OCI-LY7 (cell line): ENCODE measurements at regions of chr12 and their contacts with region 1.

Region 1: GRCh38 chr12:32708926-32709325 is 29.8 kb downstream of the DNM1L start:
- DNase-seq: no peak
- H3K4me3 ChIP-seq: no peak overlapping the region
- H3K27ac ChIP-seq: no peak overlapping the region
- H3K4me1 ChIP-seq: no peaks in the 10 kb centered on the region
- CTCF ChIP-seq: no peak

Region 2: DNA sequence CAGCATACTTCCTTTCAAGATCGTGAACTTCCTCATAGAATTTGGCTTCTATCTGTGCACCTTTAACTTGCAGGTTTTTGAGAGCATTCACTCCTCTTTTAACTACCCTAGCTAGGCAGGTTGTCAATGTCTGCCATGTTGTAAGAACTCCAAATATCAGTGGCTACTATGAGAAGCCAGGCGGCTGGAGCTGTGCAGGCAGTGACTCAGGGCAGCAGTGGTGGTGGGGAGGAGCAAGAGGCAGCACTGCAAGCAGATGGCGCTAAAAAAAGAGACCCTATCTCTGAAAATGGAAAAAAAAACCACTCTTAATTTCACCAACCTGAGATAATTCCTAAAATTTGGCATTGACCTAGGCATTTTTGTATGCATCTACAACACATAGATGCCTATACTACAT is 18.3 kb after region 1 on chr12:
- CTCF ChIA-PET with region 1: no interaction called
- POLR2A ChIA-PET with region 1: interaction called, 11 read pairs
- intact Hi-C with region 1: no loop called
- DNase-seq: no peak
- H3K4me3 ChIP-seq: no peak overlapping the region
- H3K27ac ChIP-seq: no peak overlapping the region
- H3K4me1 ChIP-seq: no peaks in the 10 kb centered on the region
- CTCF ChIP-seq: 0 out of 2 replicates have a peak, but pooled peaks have one; percentile 30